Activated CD4-positive, alpha-beta T cell treated with anti-CD3 and anti-CD28 coated beads for 36 hours (primary cell): ENCODE measurements at regions of chr6 and their contacts with region 1.

Region 1: DNA sequence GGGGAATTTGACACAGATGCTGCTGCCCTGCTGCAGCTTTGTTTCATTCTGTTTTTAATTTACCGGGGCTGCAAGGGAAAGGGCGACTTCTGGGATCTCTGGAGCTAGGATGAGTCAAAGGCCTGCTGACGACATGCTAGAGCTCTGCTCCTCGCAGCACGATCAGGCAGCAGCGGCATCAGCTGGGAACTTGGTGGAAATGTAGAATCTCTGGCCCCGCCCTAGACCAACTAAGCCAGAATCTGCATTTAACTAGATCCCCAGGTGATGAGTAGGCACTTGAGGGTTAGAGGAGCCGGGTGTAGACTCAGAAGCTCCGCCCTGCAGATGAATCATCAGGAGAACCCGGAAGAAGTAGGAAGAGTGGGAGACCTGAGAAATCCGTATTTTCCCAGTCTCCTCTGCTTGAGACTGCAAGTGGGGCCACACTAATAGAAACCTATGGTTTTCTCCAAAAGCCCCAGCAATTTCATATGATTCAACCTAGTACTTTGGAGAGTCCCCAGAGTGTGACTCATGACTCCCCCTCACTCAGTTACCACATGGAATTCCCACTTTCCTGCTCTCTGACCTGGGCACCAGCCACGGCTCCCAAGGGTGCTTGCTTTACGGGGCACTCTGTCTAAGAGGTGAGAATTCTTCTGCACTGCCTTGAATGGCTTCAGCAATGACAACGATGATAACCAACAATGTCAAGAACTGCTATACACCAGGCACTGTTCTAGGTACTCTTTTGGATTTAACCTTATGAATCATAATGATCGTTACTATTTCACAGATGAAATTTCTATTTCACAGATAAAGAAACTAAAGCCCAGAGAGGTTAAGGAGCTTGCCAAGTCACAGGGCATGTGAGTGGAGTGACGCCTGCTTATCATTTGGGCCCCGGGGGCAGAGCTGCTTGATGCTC is 18.1 kb downstream of the TUBB2B start:
- DNase-seq: peak; percentile 80
- ATAC-seq: peak; percentile 87
- H3K4me3 Mint-ChIP-seq: peak overlapping the region; percentile 32
- H3K27ac Mint-ChIP-seq: peak overlapping the region; percentile 86
- H3K4me1 Mint-ChIP-seq: peaks cover 28% of the 10 kb centered on the region
- H3K27me3 Mint-ChIP-seq: peaks cover 34% of the 10 kb centered on the region

Region 2: DNA sequence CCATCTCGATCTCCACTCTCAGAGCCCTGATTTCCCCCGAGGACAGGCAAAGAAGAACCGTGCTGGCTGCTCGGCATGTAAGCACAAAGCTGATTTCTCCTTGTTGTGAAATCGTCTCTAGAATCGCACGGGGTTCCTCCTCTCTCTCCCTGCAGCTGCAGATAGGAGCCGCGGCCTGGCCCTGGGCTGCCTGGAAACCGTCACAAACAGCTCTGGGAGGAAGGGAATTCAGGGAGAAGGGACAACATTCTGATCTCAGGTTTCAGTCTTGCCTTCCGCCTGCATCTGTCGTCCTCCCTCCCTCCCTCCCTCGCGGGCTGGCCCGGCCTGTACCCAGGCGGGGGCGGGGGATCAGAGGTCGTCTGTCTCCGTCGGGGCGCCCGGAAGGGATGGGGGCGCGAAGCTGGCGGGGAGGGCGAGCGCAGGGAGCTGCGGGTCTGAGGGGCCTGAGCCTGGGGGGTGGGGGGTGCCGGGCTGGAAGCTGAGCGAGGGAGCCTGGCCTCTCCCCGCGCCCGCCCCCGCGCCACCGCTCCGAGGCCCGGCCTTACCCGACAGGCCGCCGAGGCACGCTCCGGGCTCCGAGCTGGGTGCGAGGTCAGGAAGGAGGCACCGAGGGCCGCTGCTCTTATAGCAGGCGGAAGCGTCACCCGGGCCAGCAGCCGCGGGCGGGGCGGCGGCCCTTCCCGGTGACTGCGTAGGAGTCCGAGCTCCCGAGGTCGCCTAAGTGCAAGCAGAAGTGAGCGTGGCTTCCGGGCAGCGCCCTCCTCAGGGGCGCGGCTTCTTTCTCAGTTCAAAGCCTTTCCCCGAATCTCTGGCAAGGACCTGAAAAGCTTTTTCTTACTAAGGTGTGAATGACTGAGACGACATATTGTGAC is 367.9 kb before region 1 on chr6 and contains the start of gene SERPINB1:
- CTCF ChIA-PET with region 1: interaction called, 3 read pairs
- POLR2A ChIA-PET with region 1: no interaction called
- intact Hi-C with region 1: loop called in 1 of 2 experiments (anchors 5 kb)
- DNase-seq: peak; percentile 96
- ATAC-seq: peak; percentile 86
- H3K4me3 Mint-ChIP-seq: peak within 1 kb of the TSS; percentile 96
- H3K27ac Mint-ChIP-seq: peak within 1 kb of the TSS; percentile 91
- H3K4me1 Mint-ChIP-seq: peaks cover 67% of the 10 kb centered on the region
- H3K27me3 Mint-ChIP-seq: no peaks in the 10 kb centered on the region
- total RNA-seq, gene SERPINB1: 200 to 243 TPM

Region 3: DNA sequence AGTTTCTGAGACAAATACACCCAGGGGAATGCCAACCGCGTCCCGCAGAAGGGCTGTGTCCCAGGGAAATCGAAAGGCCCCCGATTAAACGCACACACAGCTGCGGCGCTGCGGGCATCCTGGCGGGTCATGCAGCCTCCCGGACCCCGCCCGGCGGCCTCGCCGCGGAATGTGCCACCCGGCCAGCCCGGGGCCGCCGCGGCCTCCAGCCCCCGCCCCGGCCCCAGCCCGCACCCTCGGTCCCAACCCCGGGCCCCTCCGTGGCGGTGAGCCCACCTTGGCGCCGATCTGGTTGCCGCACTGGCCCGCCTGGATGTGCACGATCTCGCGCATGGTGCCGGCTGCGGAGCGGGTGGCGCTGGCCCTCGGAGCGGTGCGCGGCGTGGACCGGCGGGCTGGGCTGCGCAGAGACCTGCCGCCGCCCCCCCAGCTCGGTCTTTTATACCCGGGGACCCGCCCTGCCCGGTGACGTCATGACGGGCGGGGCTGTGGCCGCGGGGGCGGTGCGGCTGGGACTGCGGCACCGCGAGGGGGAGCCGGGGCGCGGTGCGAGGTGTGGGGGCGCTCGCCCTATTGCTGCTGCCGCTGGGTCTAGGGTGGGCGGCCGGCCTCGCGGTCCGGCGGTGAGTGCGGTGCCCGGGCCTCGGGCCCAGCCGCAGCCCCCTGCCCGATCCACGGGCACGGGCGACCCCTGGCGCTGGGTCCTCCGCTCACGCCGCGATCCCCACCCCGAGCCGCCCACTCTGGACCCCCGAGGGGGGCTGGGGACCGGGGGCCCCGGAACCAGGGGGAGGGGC is 52.0 kb before region 1 on chr6 and contains the start of gene TUBB2A:
- CTCF ChIA-PET with region 1: interaction called, 3 read pairs
- POLR2A ChIA-PET with region 1: interaction called, 3 read pairs
- intact Hi-C with region 1: loop called (anchors 1 to 2 kb)
- DNase-seq: peak; percentile 87
- ATAC-seq: peak; percentile 68
- H3K4me3 Mint-ChIP-seq: peak within 1 kb of the TSS; percentile 74
- H3K27ac Mint-ChIP-seq: peak within 1 kb of the TSS; percentile 55
- H3K4me1 Mint-ChIP-seq: peaks cover 25% of the 10 kb centered on the region
- H3K27me3 Mint-ChIP-seq: peaks cover 20% of the 10 kb centered on the region
- total RNA-seq, gene TUBB2A: 1.7 to 1.8 TPM

Region 4: GRCh38 chr6:3162565-3163247 is 46.7 kb before region 1 on chr6:
- CTCF ChIA-PET with region 1: interaction called, 3 read pairs
- POLR2A ChIA-PET with region 1: no interaction called
- intact Hi-C with region 1: loop called (anchors 1 to 2 kb)
- DNase-seq: peak; percentile 74
- ATAC-seq: peak; percentile 84
- H3K4me3 Mint-ChIP-seq: peak overlapping the region; percentile 66
- H3K27ac Mint-ChIP-seq: peak overlapping the region; percentile 47
- H3K4me1 Mint-ChIP-seq: peaks cover 30% of the 10 kb centered on the region
- H3K27me3 Mint-ChIP-seq: peaks cover 28% of the 10 kb centered on the region

Region 5: DNA sequence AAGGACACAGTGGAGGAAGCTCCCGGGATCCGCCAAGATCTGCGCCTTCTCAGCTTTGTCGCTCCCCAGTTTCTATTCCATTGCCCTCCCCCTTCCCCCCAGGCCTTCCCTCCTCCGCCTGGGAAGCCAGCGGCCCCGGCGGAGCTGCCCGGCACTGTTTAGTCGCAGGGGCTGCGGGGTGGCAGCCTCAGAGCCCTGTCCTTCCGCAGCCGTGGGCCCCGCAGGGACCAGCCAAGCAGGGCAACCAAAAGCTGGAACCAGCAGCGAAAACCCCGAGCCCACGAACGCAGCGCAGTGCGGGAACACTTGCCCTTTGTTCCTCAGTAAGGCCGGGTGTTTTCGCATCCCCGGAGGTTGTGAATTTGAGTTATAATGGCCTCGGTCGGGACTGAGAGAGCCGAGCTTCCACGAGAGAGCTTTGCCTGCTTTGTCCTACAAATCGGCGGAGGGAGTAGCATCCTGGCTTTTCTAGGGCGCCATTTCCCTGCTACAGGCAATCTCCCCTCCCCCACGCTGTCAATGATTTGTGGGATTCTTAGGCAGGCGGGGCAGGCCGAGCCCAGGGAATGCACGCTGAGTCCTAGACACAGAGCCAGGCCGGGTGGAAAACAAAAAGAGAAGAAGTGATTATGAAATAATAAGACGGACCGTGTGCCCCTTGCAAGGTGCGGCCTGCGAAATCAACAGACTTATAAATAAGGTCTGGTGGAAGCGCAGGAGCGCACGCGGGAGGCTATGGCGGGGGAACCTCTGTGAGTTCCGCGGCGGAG is 22.1 kb after region 1 on chr6:
- CTCF ChIA-PET with region 1: interaction called, 6 read pairs
- POLR2A ChIA-PET with region 1: no interaction called
- intact Hi-C with region 1: loop called (anchors 1 to 2 kb)
- DNase-seq: peak; percentile 27
- ATAC-seq: no peak
- H3K4me3 Mint-ChIP-seq: peak overlapping the region; percentile 55
- H3K27ac Mint-ChIP-seq: no peak overlapping the region
- H3K4me1 Mint-ChIP-seq: peaks cover 43% of the 10 kb centered on the region
- H3K27me3 Mint-ChIP-seq: peaks cover 66% of the 10 kb centered on the region

Region 6: GRCh38 chr6:3251462-3252314 is 42.3 kb after region 1 on chr6:
- CTCF ChIA-PET with region 1: interaction called, 17 read pairs
- POLR2A ChIA-PET with region 1: no interaction called
- intact Hi-C with region 1: loop called in 1 of 2 experiments (anchors 2 kb)
- DNase-seq: peak; percentile 89
- ATAC-seq: peak; percentile 95
- H3K4me3 Mint-ChIP-seq: no peak overlapping the region
- H3K27ac Mint-ChIP-seq: no peak overlapping the region
- H3K4me1 Mint-ChIP-seq: peaks cover 6% of the 10 kb centered on the region
- H3K27me3 Mint-ChIP-seq: peaks cover 29% of the 10 kb centered on the region

Region 7: GRCh38 chr6:3258720-3259490 is 49.5 kb after region 1 on chr6 and contains the start of gene PSMG4:
- CTCF ChIA-PET with region 1: interaction called, 5 read pairs
- POLR2A ChIA-PET with region 1: interaction called, 3 read pairs
- intact Hi-C with region 1: loop called (anchors 1 to 2 kb)
- DNase-seq: peak; percentile 97
- ATAC-seq: peak; percentile 83
- H3K4me3 Mint-ChIP-seq: peak within 1 kb of the TSS; percentile 89
- H3K27ac Mint-ChIP-seq: peak within 1 kb of the TSS; percentile 92
- H3K4me1 Mint-ChIP-seq: peaks cover 35% of the 10 kb centered on the region
- H3K27me3 Mint-ChIP-seq: peaks cover 3% of the 10 kb centered on the region
- total RNA-seq, gene PSMG4: 22.2 to 23.2 TPM

Region 8: GRCh38 chr6:3444276-3445088 is 235.1 kb after region 1 on chr6:
- CTCF ChIA-PET with region 1: no interaction called
- POLR2A ChIA-PET with region 1: no interaction called
- intact Hi-C with region 1: no loop called
- DNase-seq: no peak
- ATAC-seq: no peak
- H3K4me3 Mint-ChIP-seq: no peak overlapping the region
- H3K27ac Mint-ChIP-seq: no peak overlapping the region
- H3K4me1 Mint-ChIP-seq: peaks cover 11% of the 10 kb centered on the region
- H3K27me3 Mint-ChIP-seq: no peaks in the 10 kb centered on the region